ENCODE measurements at regions of chr19 and their contacts with region 1.

Region 1: DNA sequence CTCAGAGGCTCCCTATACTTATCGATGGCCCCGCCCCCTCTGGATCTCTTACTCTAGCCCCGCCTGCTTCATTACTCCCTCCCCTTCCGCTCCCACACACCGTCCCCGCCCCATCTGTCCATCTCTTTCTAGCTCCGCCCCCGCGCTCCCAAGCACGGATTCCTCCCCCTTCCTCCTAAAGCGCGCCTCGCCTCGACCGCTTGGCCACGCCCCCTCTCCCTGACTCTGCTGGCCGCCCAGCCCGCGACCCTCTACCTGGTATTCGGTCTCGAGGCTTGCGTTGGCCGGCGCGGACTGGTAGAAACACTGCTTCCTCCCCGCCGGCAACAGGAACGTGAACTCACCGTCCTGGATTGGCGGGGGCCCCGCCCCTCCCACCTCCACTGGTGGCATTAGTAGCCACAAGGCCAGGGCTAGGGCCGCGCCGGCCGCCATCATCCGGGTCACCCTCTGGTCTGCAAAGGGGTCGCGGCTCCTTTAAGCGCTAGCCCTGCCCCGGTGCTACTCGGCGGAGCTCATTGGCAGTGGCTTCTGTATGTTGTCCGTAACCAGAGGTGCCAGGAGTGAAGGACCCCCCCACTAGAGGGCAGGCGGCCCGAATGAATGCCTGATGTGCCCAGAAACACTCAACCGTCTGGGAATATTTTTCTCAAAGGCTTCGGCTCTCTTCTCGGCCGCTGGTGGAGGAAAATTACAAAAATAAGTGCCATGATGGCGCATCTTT is at the start of gene TMED1:
- DNase-seq: peak; percentile 94 to 98
- H3K4me3 ChIP-seq: peak within 1 kb of the TSS; percentile 62
- H3K27ac ChIP-seq: peak within 1 kb of the TSS; percentile 89
- H3K4me1 ChIP-seq: peaks cover 13% of the 10 kb centered on the region
- H3K27me3 ChIP-seq: no peaks in the 10 kb centered on the region
- CTCF ChIP-seq: peak; percentile 56
- total RNA-seq, gene TMED1: 21.3 and 31.4 TPM in 2 replicates

Region 2: DNA sequence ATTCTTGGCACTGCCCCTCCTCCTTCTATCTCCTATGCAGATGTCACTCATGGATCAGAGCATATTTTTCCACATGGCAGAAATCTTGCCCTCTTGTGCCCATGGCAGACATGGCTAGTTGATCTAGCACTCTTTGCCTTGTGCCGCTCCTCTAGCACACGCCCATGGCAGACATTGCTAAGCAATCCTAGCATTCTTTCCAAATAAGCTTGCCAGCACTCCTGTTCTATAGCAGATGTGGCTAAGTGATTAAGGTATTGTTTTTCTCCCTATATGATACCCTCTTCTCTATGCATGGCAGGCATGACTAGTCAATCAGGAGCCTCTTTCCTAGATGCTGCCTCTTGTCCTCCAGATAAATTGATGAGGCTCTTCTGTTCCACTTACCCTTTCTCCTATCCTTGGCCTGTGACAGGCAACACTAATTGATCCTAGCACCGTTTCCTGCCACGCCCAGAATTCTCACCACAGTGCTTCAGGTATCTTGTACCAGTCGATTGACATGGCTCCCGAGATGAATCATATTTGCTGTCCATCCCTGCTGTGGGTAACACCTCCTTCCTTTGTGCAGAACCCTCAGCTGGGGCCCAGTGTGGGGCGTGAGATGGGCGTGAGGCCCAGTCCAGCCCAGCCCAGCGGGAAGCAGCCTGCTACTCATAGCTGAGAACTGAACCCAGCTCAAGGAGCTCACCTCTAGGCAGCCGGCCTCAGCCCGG is 26.8 kb before region 1 on chr19:
- CTCF ChIA-PET with region 1: interaction called, 6 read pairs
- POLR2A ChIA-PET with region 1: no interaction called
- intact Hi-C with region 1: loop called (anchors 1 kb)
- DNase-seq: peak; percentile 81 to 88
- H3K4me3 ChIP-seq: no peak overlapping the region
- H3K27ac ChIP-seq: peak overlapping the region; percentile 48
- H3K4me1 ChIP-seq: peaks cover 17% of the 10 kb centered on the region
- H3K27me3 ChIP-seq: no peaks in the 10 kb centered on the region
- CTCF ChIP-seq: no peak

Region 3: GRCh38 chr19:10848230-10848856 is 12.4 kb after region 1 on chr19 and contains the start of gene C19orf38:
- CTCF ChIA-PET with region 1: no interaction called
- POLR2A ChIA-PET with region 1: interaction called, 11 read pairs
- intact Hi-C with region 1: no loop called
- DNase-seq: peak in 1 of 2 experiments; percentile 21
- H3K4me3 ChIP-seq: no peak within 1 kb of the TSS
- H3K27ac ChIP-seq: no peak within 1 kb of the TSS
- H3K4me1 ChIP-seq: no peaks in the 10 kb centered on the region
- H3K27me3 ChIP-seq: no peaks in the 10 kb centered on the region
- CTCF ChIP-seq: no peak
- total RNA-seq, gene C19orf38: 0.59 and 1.4 TPM in 2 replicates

Region 4: GRCh38 chr19:10854350-10855089 is 18.6 kb after region 1 on chr19:
- CTCF ChIA-PET with region 1: interaction called, 15 read pairs
- POLR2A ChIA-PET with region 1: no interaction called
- intact Hi-C with region 1: no loop called
- DNase-seq: peak in 1 of 2 experiments; percentile 35
- H3K4me3 ChIP-seq: no peak overlapping the region
- H3K27ac ChIP-seq: no peak overlapping the region
- H3K4me1 ChIP-seq: no peaks in the 10 kb centered on the region
- H3K27me3 ChIP-seq: no peaks in the 10 kb centered on the region
- CTCF ChIP-seq: no peak

Region 5: GRCh38 chr19:10864538-10864899 is 28.6 kb after region 1 on chr19:
- CTCF ChIA-PET with region 1: interaction called, 12 read pairs
- POLR2A ChIA-PET with region 1: interaction called, 24 read pairs
- intact Hi-C with region 1: loop called (anchors 1 kb)
- DNase-seq: peak; percentile 42 to 78
- H3K4me3 ChIP-seq: no peak overlapping the region
- H3K27ac ChIP-seq: no peak overlapping the region
- H3K4me1 ChIP-seq: peaks cover 10% of the 10 kb centered on the region
- H3K27me3 ChIP-seq: no peaks in the 10 kb centered on the region
- CTCF ChIP-seq: peak; percentile 95

Region 6: DNA sequence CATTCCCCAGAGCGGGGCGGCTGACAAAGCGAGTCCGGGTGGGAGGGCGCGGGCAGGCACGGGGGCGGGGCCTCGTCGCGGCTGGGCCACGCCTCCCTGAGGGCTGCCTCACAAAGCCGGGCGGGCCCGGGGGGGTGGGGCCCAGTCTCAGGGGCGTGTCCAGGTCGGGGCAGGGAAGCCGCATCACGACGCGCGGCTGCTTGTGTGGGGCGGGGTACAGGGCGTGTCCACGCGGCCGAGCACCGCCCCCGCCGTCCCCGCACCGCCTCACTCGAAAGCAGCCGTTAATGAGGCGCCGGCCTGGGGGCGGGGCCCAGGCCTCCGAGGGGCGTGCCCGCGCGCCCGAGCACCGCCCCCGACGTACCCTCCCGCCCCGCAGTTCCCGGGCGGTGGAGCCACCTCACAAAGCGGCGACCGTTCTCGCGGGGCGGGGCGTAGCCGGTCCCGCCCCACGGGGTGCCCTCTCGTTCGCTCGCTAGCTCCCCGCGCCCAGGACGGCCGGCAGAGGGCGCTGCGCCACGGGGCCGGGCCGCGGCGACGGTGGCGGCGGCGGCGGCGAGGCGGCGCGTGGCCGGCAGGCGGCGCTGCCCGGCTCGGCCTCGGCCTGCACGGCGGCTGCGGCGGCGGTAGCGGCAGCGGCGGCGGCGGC is 35.2 kb after region 1 on chr19 and contains the start of gene CARM1:
- CTCF ChIA-PET with region 1: interaction called, 8 read pairs
- POLR2A ChIA-PET with region 1: interaction called, 24 read pairs
- intact Hi-C with region 1: loop called (anchors 2 kb)
- DNase-seq: peak; percentile 90 to 99
- H3K4me3 ChIP-seq: peak within 1 kb of the TSS; percentile 85
- H3K27ac ChIP-seq: peak within 1 kb of the TSS; percentile 9; the same call in 1 of the 2 replicates
- H3K4me1 ChIP-seq: peaks cover 17% of the 10 kb centered on the region
- H3K27me3 ChIP-seq: no peaks in the 10 kb centered on the region
- CTCF ChIP-seq: peak; percentile 45; the same call in 1 of the 2 replicates
- total RNA-seq, gene CARM1: 56.0 and 63.7 TPM in 2 replicates

Region 7: GRCh38 chr19:10952809-10953208 is 116.9 kb after region 1 on chr19:
- CTCF ChIA-PET with region 1: interaction called, 24 read pairs
- POLR2A ChIA-PET with region 1: no interaction called
- intact Hi-C with region 1: no loop called
- DNase-seq: peak; percentile 67 to 84
- H3K4me3 ChIP-seq: no peak overlapping the region
- H3K27ac ChIP-seq: peak overlapping the region; percentile 37
- H3K4me1 ChIP-seq: peaks cover 37% of the 10 kb centered on the region
- H3K27me3 ChIP-seq: no peaks in the 10 kb centered on the region
- CTCF ChIP-seq: no peak

Measured in PC-9 (cell line).